Calu3 (cell line): ENCODE measurements at regions of chr16 and their contacts with region 1.

Region 1: GRCh38 chr16:89615596-89616090 is 2.2 kb downstream of the DPEP1 start:
- DNase-seq: peak; percentile 78
- H3K4me3 Mint-ChIP-seq: no peak overlapping the region
- H3K27ac Mint-ChIP-seq: no peak overlapping the region
- H3K4me1 Mint-ChIP-seq: peaks cover 15% of the 10 kb centered on the region
- H3K27me3 Mint-ChIP-seq: peaks cover 39% of the 10 kb centered on the region
- CTCF ChIP-seq: peak; percentile 94

Region 2: GRCh38 chr16:89442990-89443731 is 172.5 kb before region 1 on chr16:
- CTCF ChIA-PET with region 1: no interaction called
- intact Hi-C with region 1: no loop called
- DNase-seq: peak; percentile 96
- H3K4me3 Mint-ChIP-seq: peak overlapping the region; percentile 54
- H3K27ac Mint-ChIP-seq: peak overlapping the region; percentile 81
- H3K4me1 Mint-ChIP-seq: peaks cover 78% of the 10 kb centered on the region
- H3K27me3 Mint-ChIP-seq: no peaks in the 10 kb centered on the region
- CTCF ChIP-seq: no peak

Region 3: GRCh38 chr16:89641458-89642119 is 25.9 kb after region 1 on chr16:
- CTCF ChIA-PET with region 1: interaction called, 6 read pairs
- intact Hi-C with region 1: loop called (anchors 2 kb)
- DNase-seq: no peak
- H3K4me3 Mint-ChIP-seq: peak overlapping the region; percentile 57
- H3K27ac Mint-ChIP-seq: no peak overlapping the region
- H3K4me1 Mint-ChIP-seq: peaks cover 12% of the 10 kb centered on the region
- H3K27me3 Mint-ChIP-seq: peaks cover 46% of the 10 kb centered on the region
- CTCF ChIP-seq: no peak

Region 4: DNA sequence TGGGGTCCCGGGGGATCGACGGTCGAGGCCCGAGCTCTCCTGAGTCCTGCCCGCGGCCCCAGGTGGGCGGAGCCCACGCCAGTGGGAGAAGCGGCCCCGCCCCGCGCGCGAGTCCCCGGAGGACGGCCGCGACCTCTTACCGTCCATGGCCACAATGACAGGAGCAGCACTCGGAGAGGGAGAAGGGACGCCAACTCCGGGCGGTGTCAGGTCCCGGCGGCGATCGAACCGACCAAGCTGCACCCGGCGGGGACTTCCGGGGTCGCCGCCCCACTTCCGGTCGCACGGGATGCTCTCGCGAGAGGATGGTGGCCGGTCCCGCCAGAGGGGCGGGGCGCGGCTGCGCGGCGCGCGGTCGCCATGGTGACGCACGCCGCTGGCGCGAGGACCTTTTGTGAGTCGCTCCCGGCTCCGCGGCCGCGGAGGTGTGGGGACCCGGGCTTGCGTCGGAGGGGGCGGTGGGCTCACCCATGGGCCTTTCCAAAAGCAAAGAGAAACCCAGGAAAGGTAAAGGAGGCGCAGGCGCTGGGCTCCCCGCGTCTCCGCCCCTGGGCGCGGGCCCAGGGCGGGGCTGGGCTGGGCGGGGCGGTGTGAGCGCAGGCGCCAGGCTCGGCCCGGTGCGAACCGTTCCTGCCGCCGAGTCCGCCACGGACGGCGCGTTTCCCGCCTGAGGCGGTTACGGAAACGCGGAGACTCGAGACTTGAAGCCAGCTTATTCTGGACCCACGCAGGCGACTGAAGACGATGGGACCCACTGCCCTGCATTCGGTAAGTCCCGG is 42.0 kb after region 1 on chr16 and contains the starts of genes CHMP1A and SPATA33:
- CTCF ChIA-PET with region 1: no interaction called
- intact Hi-C with region 1: no loop called
- DNase-seq: peak; percentile 98
- H3K4me3 Mint-ChIP-seq: peak within 1 kb of the TSS; percentile 98
- H3K27ac Mint-ChIP-seq: peak within 1 kb of the TSS; percentile 88
- H3K4me1 Mint-ChIP-seq: peaks cover 20% of the 10 kb centered on the region
- H3K27me3 Mint-ChIP-seq: no peaks in the 10 kb centered on the region
- CTCF ChIP-seq: no peak
- total RNA-seq, gene CHMP1A: 132 and 135 TPM in 2 replicates
- total RNA-seq, gene SPATA33: 23.5 and 27.3 TPM in 2 replicates

Region 5: GRCh38 chr16:89922884-89923690 is 307.4 kb after region 1 on chr16 and contains the start of gene TUBB3:
- CTCF ChIA-PET with region 1: no interaction called
- intact Hi-C with region 1: no loop called
- DNase-seq: peak; percentile 88
- H3K4me3 Mint-ChIP-seq: peak within 1 kb of the TSS; percentile 76
- H3K27ac Mint-ChIP-seq: peak within 1 kb of the TSS; percentile 88
- H3K4me1 Mint-ChIP-seq: peaks cover 18% of the 10 kb centered on the region
- H3K27me3 Mint-ChIP-seq: no peaks in the 10 kb centered on the region
- CTCF ChIP-seq: no peak
- total RNA-seq, gene TUBB3: 52.1 and 61.5 TPM in 2 replicates